ENCODE measurements at regions of chrX and their contacts with region 1.

Region 1: DNA sequence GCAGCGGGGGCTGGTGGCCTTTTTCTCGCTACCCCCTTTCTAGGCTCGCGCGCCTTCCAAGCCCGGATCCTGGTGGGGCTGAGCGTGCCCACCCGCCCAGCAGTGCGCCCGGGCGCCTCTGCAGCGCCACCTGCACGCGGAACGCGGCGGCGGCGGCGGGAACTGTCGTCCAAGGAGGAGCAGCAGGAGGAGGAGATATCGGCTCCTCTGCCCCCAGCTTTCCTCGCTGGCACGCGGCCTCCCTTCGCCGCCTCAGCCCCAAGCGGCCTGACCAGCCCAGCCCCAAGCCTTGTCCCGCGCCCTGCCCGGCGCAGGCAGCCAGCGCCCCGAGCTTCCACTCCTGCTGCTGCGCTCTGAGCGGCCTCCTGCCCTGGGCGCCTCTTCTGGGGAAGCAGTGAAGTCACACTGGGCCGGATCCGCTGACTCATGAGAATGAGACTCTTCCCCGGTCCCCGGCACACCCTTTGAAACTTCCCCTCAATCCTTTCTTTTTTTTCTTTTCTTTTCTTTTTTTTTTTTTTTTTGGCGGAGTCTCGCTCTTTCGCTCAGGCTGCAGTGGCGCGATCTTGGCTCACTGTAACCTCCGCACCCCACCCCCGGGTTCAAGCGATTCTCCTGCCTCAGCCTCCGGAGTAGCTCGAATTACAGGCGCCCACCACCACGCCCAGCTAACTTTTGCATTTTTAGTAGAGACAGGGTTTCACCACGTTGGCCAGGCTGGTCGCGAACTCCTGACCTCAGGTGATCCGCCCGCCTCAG is 10.6 kb upstream of the ELF4 start:
- DNase-seq: peak; percentile 77
- H3K4me3 Mint-ChIP-seq: peak overlapping the region; percentile 61
- H3K27ac Mint-ChIP-seq: no peak overlapping the region
- H3K4me1 Mint-ChIP-seq: peaks cover 15% of the 10 kb centered on the region
- H3K27me3 Mint-ChIP-seq: no peaks in the 10 kb centered on the region

Region 2: DNA sequence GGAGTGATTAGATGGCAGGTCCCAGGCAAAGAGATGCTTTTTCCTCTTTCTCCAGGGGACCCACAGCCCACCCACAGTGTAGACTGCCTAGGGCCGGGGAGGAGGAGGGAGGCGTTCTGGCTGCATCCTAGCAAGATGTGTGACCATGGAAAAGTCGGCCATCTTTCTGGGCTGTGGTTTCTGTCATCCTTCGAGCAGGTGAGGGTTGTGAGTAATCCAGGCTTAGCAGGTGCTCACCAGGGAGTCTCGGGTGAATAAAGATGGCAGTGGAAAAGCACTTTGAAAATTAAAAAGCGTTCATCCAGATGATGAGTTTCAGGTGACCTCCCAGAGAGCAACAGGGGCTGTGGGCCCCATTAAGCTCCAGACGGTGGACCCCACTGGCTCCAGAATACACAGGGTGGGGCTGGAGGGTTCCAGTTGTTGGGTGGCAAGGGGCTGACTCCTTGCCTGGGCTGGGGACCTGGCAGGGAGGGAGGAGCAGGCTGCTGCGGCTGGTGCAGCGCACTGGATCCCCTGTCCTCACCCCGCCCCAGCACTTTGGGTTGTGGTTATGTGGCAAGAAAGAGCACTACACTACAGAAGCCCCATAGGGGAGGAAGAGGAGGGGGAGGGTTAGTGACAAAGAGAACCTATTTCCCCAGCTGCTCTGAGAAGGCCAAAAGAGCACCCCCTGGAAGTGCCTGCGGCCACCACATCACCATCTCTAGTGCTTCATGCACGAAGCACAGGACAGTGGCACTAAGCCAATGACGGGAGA is 34.3 kb before region 1 on chrX:
- CTCF ChIA-PET with region 1: interaction called, 74 read pairs
- intact Hi-C with region 1: loop called (anchors 1 kb)
- DNase-seq: peak; percentile 76
- H3K4me3 Mint-ChIP-seq: peak overlapping the region; percentile 59
- H3K27ac Mint-ChIP-seq: peak overlapping the region; percentile 89
- H3K4me1 Mint-ChIP-seq: peaks cover 74% of the 10 kb centered on the region
- H3K27me3 Mint-ChIP-seq: no peaks in the 10 kb centered on the region

Region 3: DNA sequence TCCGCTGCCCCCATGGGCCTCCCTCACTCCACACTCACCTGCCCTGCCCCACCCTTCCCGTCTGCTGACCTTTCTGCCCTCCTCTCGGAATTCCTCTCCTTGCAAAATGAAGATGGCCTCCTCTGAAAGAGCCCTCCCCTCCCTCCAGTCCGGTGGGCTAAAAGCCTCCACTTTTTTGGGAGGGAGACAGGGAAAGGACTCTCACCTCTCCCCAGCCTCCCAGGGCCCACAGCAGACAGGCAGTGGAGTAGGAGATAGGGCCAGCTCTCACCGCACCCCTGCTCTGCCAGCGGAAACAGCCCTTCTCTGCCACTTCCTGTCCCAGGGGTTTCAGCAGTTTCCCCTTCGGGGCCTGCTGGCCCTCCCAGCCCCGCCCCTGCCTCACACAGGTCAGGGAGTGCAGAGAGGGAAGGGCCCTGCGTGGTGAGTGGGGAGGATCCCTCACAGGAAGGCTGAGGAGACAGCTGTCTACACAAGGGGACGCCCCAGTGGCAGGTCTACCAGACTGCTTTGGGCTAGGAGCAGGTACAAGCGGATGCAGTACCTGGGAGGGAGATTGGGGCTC is 28.9 kb before region 1 on chrX:
- CTCF ChIA-PET with region 1: interaction called, 25 read pairs
- intact Hi-C with region 1: loop called (anchors 1 kb)
- DNase-seq: peak; percentile 94
- H3K4me3 Mint-ChIP-seq: peak overlapping the region; percentile 80
- H3K27ac Mint-ChIP-seq: peak overlapping the region; percentile 96
- H3K4me1 Mint-ChIP-seq: peaks cover 58% of the 10 kb centered on the region
- H3K27me3 Mint-ChIP-seq: no peaks in the 10 kb centered on the region

Region 4: DNA sequence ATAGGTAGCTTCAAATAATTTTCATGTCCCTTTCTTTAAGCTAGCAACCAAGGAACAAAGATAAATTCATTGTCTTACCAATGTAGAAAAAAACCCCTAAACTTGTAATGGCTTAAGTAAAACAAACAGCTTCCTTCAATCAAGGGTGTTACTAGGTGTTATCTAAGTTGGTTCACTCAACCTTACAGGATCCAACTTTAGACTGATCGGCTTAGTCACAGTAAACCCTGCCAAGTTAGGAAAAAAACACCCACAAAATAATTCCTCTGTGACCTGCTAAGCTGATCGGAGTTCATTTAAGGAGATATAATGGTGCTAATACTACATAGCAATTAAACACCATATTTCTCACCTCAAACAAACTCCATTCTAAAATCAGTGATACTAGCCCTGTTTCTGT is 34.6 kb after region 1 on chrX:
- CTCF ChIA-PET with region 1: no interaction called
- intact Hi-C with region 1: no loop called
- DNase-seq: no peak
- H3K4me3 Mint-ChIP-seq: no peak overlapping the region
- H3K27ac Mint-ChIP-seq: no peak overlapping the region
- H3K4me1 Mint-ChIP-seq: peaks cover 17% of the 10 kb centered on the region
- H3K27me3 Mint-ChIP-seq: no peaks in the 10 kb centered on the region

Region 5: GRCh38 chrX:130173190-130173895 is 52.4 kb after region 1 on chrX:
- CTCF ChIA-PET with region 1: no interaction called
- intact Hi-C with region 1: loop called (anchors 1 kb)
- DNase-seq: peak; percentile 68
- H3K4me3 Mint-ChIP-seq: peak overlapping the region; percentile 87
- H3K27ac Mint-ChIP-seq: peak overlapping the region; percentile 94
- H3K4me1 Mint-ChIP-seq: peaks cover 45% of the 10 kb centered on the region
- H3K27me3 Mint-ChIP-seq: no peaks in the 10 kb centered on the region

Region 6: GRCh38 chrX:130196466-130196865 is 75.5 kb after region 1 on chrX:
- CTCF ChIA-PET with region 1: interaction called, 3 read pairs
- intact Hi-C with region 1: loop called (anchors 1 kb)
- DNase-seq: no peak
- H3K4me3 Mint-ChIP-seq: no peak overlapping the region
- H3K27ac Mint-ChIP-seq: no peak overlapping the region
- H3K4me1 Mint-ChIP-seq: no peaks in the 10 kb centered on the region
- H3K27me3 Mint-ChIP-seq: no peaks in the 10 kb centered on the region

Region 7: DNA sequence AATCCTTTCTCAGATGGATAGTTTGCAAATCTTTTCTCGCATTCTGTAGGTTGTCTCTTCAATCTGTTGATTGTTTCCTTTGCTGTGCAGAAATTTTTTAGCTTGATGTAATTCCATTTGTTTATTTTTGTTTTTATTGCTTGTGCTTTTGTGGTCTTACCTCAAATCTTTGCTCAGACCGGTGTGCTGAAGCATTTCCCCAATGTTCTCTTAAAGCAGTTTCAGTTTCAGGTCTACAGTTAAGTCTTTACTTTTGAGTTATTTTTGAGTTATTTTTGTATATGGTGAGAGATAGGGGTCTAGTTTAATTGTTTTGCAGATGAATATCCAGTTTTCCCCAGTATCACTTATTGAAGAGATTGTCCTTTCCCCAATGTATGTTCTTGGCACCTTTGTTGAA is 200.6 kb after region 1 on chrX:
- CTCF ChIA-PET with region 1: no interaction called
- intact Hi-C with region 1: no loop called
- DNase-seq: no peak
- H3K4me3 Mint-ChIP-seq: no peak overlapping the region
- H3K27ac Mint-ChIP-seq: no peak overlapping the region
- H3K4me1 Mint-ChIP-seq: no peaks in the 10 kb centered on the region
- H3K27me3 Mint-ChIP-seq: peaks cover 4% of the 10 kb centered on the region